Ovary (tissue), 10 donors: ENCODE measurements at regions of chr2 and their contacts with region 1.

Region 1: DNA sequence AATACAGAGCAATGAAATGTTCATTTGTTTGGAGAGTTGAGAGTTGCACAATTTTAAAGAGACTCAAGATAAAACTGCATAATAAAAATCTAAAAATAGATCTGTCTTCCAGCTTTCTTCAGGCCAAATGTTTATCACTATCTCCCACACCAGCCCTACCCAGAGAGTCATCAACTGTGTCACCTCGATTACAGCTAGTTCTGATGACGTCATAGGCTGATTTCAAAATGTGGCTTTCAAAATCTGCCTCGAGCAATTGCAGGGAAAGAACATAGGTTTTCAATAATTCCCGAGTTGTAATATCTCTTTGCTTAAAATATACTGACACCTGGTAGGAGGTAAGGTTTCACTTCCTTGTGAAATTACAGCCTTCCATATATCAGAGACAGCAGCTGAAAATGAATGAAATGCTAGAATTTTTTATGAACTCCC is 677.6 kb upstream of the ID2 start:
- DNase-seq: peak in 3 of 5 donors; percentile 43 to 77 (median 51)
- H3K4me3 ChIP-seq: peak overlapping the region; percentile 1
- H3K27ac ChIP-seq: peak overlapping the region; percentile 2 to 92
- H3K4me1 ChIP-seq: peaks cover 16% of the 10 kb centered on the region
- H3K27me3 ChIP-seq: no peaks in the 10 kb centered on the region
- CTCF ChIP-seq: no peak
- EP300 ChIP-seq: no peak
- POLR2A ChIP-seq: no peak

Region 2: GRCh38 chr2:8539743-8540551 is 535.7 kb after region 1 on chr2:
- intact Hi-C with region 1: loop called in 1 of 4 experiments (anchors 10 kb)
- DNase-seq: peak in 1 of 5 donors; percentile 15
- H3K4me3 ChIP-seq: no peak overlapping the region
- H3K27ac ChIP-seq: no peak overlapping the region
- H3K4me1 ChIP-seq: peaks cover 7% of the 10 kb centered on the region
- H3K27me3 ChIP-seq: no peaks in the 10 kb centered on the region
- CTCF ChIP-seq: no peak
- EP300 ChIP-seq: no peak
- POLR2A ChIP-seq: no peak